ENCODE measurements at regions of chr1 and their contacts with region 1.

Region 1: DNA sequence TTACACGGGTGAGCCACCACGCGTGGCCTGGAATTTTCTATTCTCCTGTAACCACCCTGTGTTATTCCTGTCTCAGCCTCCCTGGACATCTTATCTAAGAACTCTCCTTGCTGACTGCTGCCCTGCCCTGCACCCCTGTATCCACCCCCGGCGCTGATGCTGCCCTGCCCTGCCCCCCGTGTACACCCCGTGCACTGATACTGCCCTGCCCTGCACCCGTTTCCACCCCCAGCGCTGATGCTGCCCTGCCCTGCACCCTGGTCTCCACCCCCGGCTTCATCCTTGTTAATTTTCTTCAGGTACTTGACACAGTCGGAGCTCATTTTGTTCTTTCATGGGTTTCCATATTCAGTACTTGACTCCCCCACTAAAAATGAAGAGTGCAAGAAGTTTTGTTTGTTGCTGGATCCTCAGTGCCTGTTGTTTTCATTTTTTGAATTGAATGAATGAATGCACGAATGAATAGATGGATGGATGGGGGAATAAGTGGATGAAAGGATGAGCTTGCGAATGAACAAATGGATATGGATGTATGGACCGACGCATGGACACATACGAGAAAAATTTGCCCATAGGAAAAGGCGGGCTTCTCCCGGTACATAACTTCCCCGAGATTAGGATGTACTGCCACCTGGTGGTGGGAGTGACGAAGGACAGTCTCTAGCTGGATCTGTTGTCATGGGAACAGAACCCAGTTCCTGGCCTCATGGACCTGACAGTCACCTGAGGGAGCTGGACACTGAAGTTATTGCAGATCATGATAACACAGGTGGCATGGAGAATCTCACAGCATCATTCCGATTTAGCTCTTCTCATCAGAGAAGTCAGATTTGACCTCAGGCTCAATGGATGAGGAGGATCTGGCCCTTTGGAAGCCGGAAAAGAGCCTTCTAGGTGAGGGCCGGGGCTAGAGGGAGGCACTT is 14.9 kb downstream of the AADACL4 start:
- DNase-seq: peak; percentile 78
- ATAC-seq: peak; percentile 90
- H3K4me3 Mint-ChIP-seq: peak overlapping the region; percentile 22
- H3K27ac Mint-ChIP-seq: no peak overlapping the region
- H3K4me1 Mint-ChIP-seq: peaks cover 7% of the 10 kb centered on the region
- H3K27me3 Mint-ChIP-seq: peaks cover 6% of the 10 kb centered on the region
- CTCF ChIP-seq: peak; percentile 97

Region 2: GRCh38 chr1:12296623-12297022 is 362.2 kb before region 1 on chr1:
- CTCF ChIA-PET with region 1: interaction called, 10 read pairs
- POLR2A ChIA-PET with region 1: no interaction called
- intact Hi-C with region 1: no loop called
- DNase-seq: no peak
- ATAC-seq: peak; percentile 88
- H3K4me3 Mint-ChIP-seq: no peak overlapping the region
- H3K27ac Mint-ChIP-seq: peak overlapping the region; percentile 74
- H3K4me1 Mint-ChIP-seq: peaks cover 33% of the 10 kb centered on the region
- H3K27me3 Mint-ChIP-seq: no peaks in the 10 kb centered on the region
- CTCF ChIP-seq: no peak

Region 3: DNA sequence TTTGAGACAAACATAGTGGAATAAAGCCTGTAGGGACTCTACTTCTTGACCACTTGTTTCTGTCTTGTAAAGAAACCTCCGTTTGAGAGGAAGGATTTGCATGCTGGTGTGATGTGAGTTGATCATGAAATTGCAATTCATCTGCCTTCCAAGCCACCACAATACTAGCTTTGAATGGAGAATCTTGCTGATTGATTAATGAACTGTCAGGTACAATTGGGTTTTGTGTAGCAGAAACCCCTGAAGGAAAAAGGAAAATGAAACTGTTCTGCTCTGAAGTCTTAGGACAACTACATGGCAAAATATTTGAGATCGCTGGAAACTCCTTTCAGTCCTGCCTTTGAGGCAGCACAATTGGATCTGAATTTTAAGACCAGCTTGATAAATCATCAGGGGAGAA is 338.3 kb before region 1 on chr1:
- CTCF ChIA-PET with region 1: interaction called, 54 read pairs
- POLR2A ChIA-PET with region 1: no interaction called
- intact Hi-C with region 1: loop called (anchors 10 kb)
- DNase-seq: no peak
- ATAC-seq: no peak
- H3K4me3 Mint-ChIP-seq: no peak overlapping the region
- H3K27ac Mint-ChIP-seq: no peak overlapping the region
- H3K4me1 Mint-ChIP-seq: peaks cover 2% of the 10 kb centered on the region
- H3K27me3 Mint-ChIP-seq: no peaks in the 10 kb centered on the region
- CTCF ChIP-seq: no peak

Region 4: GRCh38 chr1:12630946-12631530 is 27.8 kb before region 1 on chr1:
- CTCF ChIA-PET with region 1: interaction called, 12 read pairs
- POLR2A ChIA-PET with region 1: no interaction called
- intact Hi-C with region 1: no loop called
- DNase-seq: no peak
- ATAC-seq: no peak
- H3K4me3 Mint-ChIP-seq: no peak overlapping the region
- H3K27ac Mint-ChIP-seq: no peak overlapping the region
- H3K4me1 Mint-ChIP-seq: peaks cover 5% of the 10 kb centered on the region
- H3K27me3 Mint-ChIP-seq: peaks cover 7% of the 10 kb centered on the region
- CTCF ChIP-seq: no peak